AG04449 (cell line): ENCODE measurements at regions of chr3 and their contacts with region 1.

Region 1: GRCh38 chr3:53130179-53131061 is at the start of gene RFT1:
- DNase-seq: peak; percentile 78
- H3K4me3 ChIP-seq: peak within 1 kb of the TSS; percentile 97
- CTCF ChIP-seq: peak; percentile 13

Region 2: GRCh38 chr3:53140847-53141845 is 10.7 kb after region 1 on chr3:
- CTCF ChIA-PET with region 1: interaction called, 130 read pairs
- POLR2A ChIA-PET with region 1: no interaction called
- DNase-seq: peak; percentile 38
- H3K4me3 ChIP-seq: no peak overlapping the region
- CTCF ChIP-seq: no peak

Region 3: GRCh38 chr3:53166781-53167291 is 36.4 kb after region 1 on chr3:
- CTCF ChIA-PET with region 1: interaction called, 10 read pairs
- POLR2A ChIA-PET with region 1: no interaction called
- DNase-seq: no peak
- H3K4me3 ChIP-seq: no peak overlapping the region
- CTCF ChIP-seq: no peak

Region 4: GRCh38 chr3:53187430-53187829 is 57.0 kb after region 1 on chr3:
- CTCF ChIA-PET with region 1: interaction called, 77 read pairs
- POLR2A ChIA-PET with region 1: no interaction called
- DNase-seq: no peak
- H3K4me3 ChIP-seq: no peak overlapping the region
- CTCF ChIP-seq: no peak

Region 5: GRCh38 chr3:53278667-53279066 is 148.2 kb after region 1 on chr3:
- CTCF ChIA-PET with region 1: no interaction called
- POLR2A ChIA-PET with region 1: no interaction called
- DNase-seq: no peak
- H3K4me3 ChIP-seq: no peak overlapping the region
- CTCF ChIP-seq: no peak